SK-N-SH (cell line): ENCODE measurements at regions of chr13 and their contacts with region 1.

Region 1: GRCh38 chr13:106619688-106620555 is 52.0 kb upstream of the ARGLU1 start:
- DNase-seq: peak; percentile 70
- H3K4me3 ChIP-seq: no peak overlapping the region; a peak in 1 of 4 replicates
- H3K27ac ChIP-seq: no peak overlapping the region
- H3K4me1 ChIP-seq: no peaks in the 10 kb centered on the region
- H3K27me3 ChIP-seq: peaks cover 11% of the 10 kb centered on the region; the same call in 1 of the 2 replicates
- CTCF ChIP-seq: peak; percentile 78
- EP300 ChIP-seq: no peak
- RAD21 ChIP-seq: peak; percentile 77

Region 2: DNA sequence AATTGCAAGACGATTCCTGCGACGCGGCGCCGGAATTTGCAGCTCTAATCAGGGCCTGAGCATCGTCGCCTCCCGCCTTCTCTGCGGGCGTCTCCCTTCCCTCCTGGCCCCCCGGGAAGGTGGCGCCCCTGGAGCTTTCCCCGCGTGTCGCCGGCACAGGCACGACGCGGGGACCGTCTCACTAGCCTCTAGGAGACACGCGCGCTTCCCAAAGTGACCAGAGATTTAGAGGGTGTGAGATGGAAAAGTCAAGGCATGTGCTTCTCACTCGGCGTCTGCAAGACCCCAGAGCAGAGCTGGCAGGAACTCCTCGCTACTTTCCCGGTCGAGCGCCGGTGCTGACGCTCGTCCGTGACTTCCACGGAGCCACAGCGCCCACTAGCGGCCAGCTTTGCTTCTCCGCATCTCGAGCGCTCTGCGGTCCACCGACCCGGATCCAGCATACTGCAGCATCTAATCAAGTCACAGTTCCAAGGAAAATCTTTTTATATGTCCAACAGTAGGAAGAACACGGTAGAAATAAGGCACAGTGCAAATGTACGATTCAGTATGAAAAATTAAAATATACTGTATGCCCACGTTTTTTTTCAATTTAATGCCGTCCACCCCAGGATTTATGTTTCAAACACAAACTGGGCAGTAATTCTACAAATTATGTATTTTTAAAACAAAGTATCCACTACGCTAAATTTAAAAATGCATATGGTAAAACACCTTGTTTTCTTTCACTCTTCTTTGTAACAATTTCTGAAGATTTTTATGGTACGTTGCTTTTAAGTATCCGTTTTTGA is 83.5 kb before region 1 on chr13:
- CTCF ChIA-PET with region 1: interaction called, 11 read pairs
- POLR2A ChIA-PET with region 1: no interaction called
- DNase-seq: peak; percentile 81
- H3K4me3 ChIP-seq: peak overlapping the region; percentile 76 to 77
- H3K27ac ChIP-seq: peak overlapping the region in 1 of 2 experiments; percentile 62; a peak in 1 of 4 replicates
- H3K4me1 ChIP-seq: peaks cover 0 to 8% of the 10 kb centered on the region in 2 experiments; a peak in 2 of 4 replicates
- H3K27me3 ChIP-seq: no peaks in the 10 kb centered on the region
- CTCF ChIP-seq: peak; percentile 96
- EP300 ChIP-seq: no peak
- RAD21 ChIP-seq: peak; percentile 95

Region 3: GRCh38 chr13:106609116-106609515 is 10.8 kb before region 1 on chr13:
- CTCF ChIA-PET with region 1: interaction called, 15 read pairs
- POLR2A ChIA-PET with region 1: interaction called, 3 read pairs
- DNase-seq: no peak
- H3K4me3 ChIP-seq: no peak overlapping the region
- H3K27ac ChIP-seq: no peak overlapping the region
- H3K4me1 ChIP-seq: peaks cover 0 to 2% of the 10 kb centered on the region in 2 experiments; a peak in 1 of 4 replicates
- H3K27me3 ChIP-seq: no peaks in the 10 kb centered on the region
- CTCF ChIP-seq: no peak
- EP300 ChIP-seq: no peak
- RAD21 ChIP-seq: no peak

Region 4: GRCh38 chr13:106633321-106633720 is 13.4 kb after region 1 on chr13:
- CTCF ChIA-PET with region 1: interaction called, 20 read pairs
- POLR2A ChIA-PET with region 1: no interaction called
- DNase-seq: no peak
- H3K4me3 ChIP-seq: no peak overlapping the region
- H3K27ac ChIP-seq: no peak overlapping the region
- H3K4me1 ChIP-seq: no peaks in the 10 kb centered on the region
- H3K27me3 ChIP-seq: peaks cover 4% of the 10 kb centered on the region; the same call in 1 of the 2 replicates
- CTCF ChIP-seq: no peak
- EP300 ChIP-seq: no peak
- RAD21 ChIP-seq: no peak